ENCODE measurements at regions of chr2 and their contacts with region 1.

Region 1: GRCh38 chr2:111030260-111030891 is 90.3 kb upstream of the BCL2L11 start:
- DNase-seq: no peak
- ATAC-seq: no peak
- H3K4me3 ChIP-seq: no peak overlapping the region
- H3K27ac ChIP-seq: no peak overlapping the region
- H3K4me1 ChIP-seq: peaks cover 4% of the 10 kb centered on the region
- H3K27me3 ChIP-seq: no peaks in the 10 kb centered on the region
- CTCF ChIP-seq: no peak

Region 2: DNA sequence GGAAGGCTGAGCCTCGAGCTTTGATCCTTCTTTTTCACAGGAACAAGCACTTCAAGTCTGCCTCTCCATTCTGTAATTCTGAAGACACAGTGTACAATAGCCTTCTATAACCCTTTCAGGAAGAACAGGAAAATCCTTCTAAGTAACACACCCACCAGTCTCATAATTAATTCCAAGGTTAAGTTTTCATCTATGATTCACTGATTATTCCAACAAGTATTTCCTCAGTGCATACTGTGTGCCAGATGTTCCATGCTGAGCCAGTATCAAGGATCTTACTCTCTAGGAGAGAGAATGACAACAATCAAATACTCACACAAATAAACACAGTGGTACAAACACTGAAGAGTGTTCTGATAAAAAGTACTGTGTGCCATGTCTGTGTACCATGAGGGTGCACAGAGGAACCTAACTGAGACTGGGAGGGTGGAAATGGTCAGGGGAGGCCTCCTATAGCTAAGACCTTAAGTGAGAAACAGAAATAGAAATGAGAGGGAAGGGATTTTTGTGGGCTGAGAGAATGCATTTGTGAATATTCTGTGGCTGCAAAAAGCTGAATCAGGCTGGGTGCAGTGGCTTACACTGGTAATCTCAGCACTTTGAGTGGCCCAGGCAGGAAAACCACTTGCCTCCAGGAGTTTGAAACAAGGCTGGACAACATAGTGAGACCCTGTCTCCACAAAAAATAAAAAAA is 810.7 kb before region 1 on chr2:
- intact Hi-C with region 1: no loop called
- DNase-seq: no peak
- ATAC-seq: no peak
- H3K4me3 ChIP-seq: no peak overlapping the region
- H3K27ac ChIP-seq: no peak overlapping the region
- H3K4me1 ChIP-seq: peaks cover 35% of the 10 kb centered on the region
- H3K27me3 ChIP-seq: no peaks in the 10 kb centered on the region
- CTCF ChIP-seq: no peak

Region 3: DNA sequence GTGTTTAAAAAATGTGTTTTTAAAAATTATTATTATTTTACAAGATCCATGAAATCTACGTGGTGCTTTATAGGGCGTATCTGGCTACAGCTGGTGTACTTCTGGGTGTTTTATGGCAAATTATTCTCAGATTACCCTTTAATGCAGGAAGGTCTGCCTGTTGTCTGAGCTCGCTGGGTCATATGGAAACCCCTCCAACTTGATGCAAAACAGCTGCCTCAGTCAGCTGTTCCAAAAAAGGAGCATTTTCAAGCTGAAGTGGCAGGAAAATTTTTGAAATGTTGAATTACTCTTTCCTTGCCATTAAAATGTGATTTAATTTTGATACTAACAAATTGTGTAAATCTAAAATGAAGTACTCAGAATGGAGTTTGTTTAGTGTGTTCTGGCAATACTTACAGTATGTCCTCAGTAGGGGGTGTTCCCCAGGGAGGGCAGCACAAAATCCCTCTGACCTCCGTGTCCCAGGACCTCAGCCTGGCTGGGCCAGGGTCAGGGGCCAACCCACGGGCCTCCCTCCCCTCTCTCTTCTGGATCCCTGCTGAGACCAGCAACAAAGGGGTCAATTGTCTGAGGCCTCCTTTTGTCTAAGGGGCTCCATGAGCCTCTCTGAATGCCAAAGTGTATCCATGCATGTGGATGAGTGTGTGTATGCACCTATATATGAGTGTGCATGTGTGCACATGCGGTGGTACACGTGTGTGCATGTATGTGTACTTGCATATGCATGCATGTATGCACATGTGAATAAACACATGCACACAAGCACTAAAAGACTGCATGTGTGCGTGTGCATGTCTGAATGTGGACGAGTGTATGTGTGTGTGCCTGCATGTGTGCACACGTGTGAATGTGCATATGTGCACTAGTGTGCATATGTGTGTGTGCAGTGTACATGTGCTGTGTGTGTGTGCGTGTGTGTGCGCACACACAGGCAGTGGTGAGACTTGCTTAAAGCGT is 192.7 kb before region 1 on chr2:
- intact Hi-C with region 1: loop called in 1 of 2 experiments (anchors 1 kb)
- DNase-seq: no peak
- ATAC-seq: no peak
- H3K4me3 ChIP-seq: no peak overlapping the region
- H3K27ac ChIP-seq: no peak overlapping the region
- H3K4me1 ChIP-seq: no peaks in the 10 kb centered on the region
- H3K27me3 ChIP-seq: peaks cover 0 to 2% (median 0%) of the 10 kb centered on the region in 3 donors
- CTCF ChIP-seq: no peak

Measured in psoas muscle (tissue), 8 donors.